PC-3 (cell line): ENCODE measurements at regions of chr1 and their contacts with region 1.

Region 1: DNA sequence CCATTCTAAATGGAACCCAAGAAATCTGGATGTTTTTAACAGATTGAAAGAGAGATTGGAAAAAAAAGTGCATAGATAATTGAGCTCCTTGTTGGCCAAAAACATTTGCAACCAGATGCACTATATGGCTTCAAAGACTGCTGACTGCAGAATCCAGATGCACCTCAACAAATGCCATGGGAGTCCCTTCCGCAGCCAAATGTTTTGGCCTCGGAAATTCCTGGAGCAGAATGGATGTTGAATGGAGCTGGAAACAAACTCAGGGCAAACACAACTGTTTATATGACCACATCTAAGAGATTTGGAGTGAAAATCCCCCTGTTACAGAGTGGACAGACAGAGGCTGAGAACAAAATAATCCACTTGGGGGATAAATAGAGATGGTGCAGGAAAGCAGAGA is 285.0 kb upstream of the NFIA start:
- DNase-seq: no peak
- ATAC-seq: no peak
- H3K4me3 ChIP-seq: no peak overlapping the region
- H3K27ac ChIP-seq: no peak overlapping the region
- H3K4me1 ChIP-seq: no peaks in the 10 kb centered on the region
- H3K27me3 ChIP-seq: peaks cover 57% of the 10 kb centered on the region
- CTCF ChIP-seq: no peak

Region 2: DNA sequence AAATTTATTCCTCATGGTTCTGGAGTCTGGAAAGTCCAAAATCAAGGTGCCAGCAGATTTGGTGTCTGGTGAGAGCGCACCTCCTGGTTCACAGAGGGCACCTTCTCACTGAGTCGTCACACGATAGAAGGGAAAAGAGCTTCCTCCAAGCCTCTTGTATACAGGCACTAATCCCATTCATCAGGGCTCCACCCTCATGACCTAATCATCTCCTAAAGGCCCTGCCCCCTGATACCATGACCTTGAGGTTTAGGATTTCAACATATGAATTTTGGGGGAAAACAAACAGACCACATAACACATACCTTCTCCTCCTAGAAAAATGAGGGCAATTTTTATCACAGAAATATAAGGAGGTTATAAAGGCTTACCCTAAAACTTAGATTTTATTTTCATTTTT is 197.0 kb after region 1 on chr1:
- CTCF ChIA-PET with region 1: no interaction called
- POLR2A ChIA-PET with region 1: interaction called, 17 read pairs
- intact Hi-C with region 1: no loop called
- DNase-seq: no peak
- ATAC-seq: no peak
- H3K4me3 ChIP-seq: no peak overlapping the region
- H3K27ac ChIP-seq: no peak overlapping the region
- H3K4me1 ChIP-seq: peaks cover 18% of the 10 kb centered on the region
- H3K27me3 ChIP-seq: no peaks in the 10 kb centered on the region
- CTCF ChIP-seq: no peak